ENCODE measurements at regions of chr4 and their contacts with region 1.

Region 1: DNA sequence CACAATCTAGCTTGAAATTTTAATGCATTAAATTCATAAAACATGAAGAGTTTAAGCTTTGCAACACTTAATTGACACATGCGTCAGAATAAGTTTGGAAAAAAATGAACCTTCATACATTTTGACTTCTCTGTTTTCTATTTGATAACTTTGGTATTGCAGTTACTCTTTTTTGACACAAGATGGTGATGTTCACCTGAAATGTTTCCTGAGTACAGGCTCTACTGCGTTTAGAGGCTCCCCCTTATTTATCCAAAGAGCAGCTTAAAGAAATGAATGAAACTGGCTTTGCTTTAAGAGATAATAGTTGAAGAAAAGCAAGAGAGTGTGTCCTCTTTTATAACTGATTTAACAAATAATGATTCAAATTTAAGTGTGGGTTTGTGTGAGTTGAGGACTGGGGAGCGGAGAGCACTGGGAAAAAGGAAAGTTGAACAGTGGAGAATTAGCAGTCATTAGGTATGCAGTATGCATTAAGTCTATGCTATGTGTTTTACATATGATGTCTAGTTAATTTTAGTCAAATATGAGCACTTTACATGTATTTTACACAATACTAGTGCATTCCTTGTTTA is 180.6 kb upstream of the NUDT6 start:
- DNase-seq: peak in 3 of 9 donors; percentile 5 to 13 (median 8)
- ATAC-seq: peak; percentile 64
- H3K4me3 ChIP-seq: no peak overlapping the region
- H3K4me3 Mint-ChIP-seq: no peak overlapping the region
- H3K27ac ChIP-seq: no peak overlapping the region
- H3K27ac Mint-ChIP-seq: peak overlapping the region in 1 of 9 donors; percentile 12
- H3K4me1 ChIP-seq: no peaks in the 10 kb centered on the region
- H3K4me1 Mint-ChIP-seq: no peaks in the 10 kb centered on the region
- H3K27me3 ChIP-seq: no peaks in the 10 kb centered on the region
- H3K27me3 Mint-ChIP-seq: no peaks in the 10 kb centered on the region

Region 2: GRCh38 chr4:123390846-123391456 is 288.0 kb after region 1 on chr4:
- CTCF ChIA-PET with region 1: no interaction called
- POLR2A ChIA-PET with region 1: no interaction called
- intact Hi-C with region 1: loop called in 1 of 2 experiments (anchors 1 kb)
- DNase-seq: peak in 4 of 9 donors; percentile 9 to 32 (median 23)
- ATAC-seq: no peak
- H3K4me3 ChIP-seq: no peak overlapping the region
- H3K4me3 Mint-ChIP-seq: no peak overlapping the region
- H3K27ac ChIP-seq: no peak overlapping the region
- H3K27ac Mint-ChIP-seq: no peak overlapping the region
- H3K4me1 ChIP-seq: no peaks in the 10 kb centered on the region
- H3K4me1 Mint-ChIP-seq: peaks cover 0 to 4% (median 0%) of the 10 kb centered on the region in 7 donors
- H3K27me3 ChIP-seq: no peaks in the 10 kb centered on the region
- H3K27me3 Mint-ChIP-seq: peaks cover 0 to 33% (median 13%) of the 10 kb centered on the region in 5 donors

Region 3: GRCh38 chr4:123564758-123565346 is 461.9 kb after region 1 on chr4:
- CTCF ChIA-PET with region 1: no interaction called
- POLR2A ChIA-PET with region 1: no interaction called
- intact Hi-C with region 1: loop called in 1 of 2 experiments (anchors 2 kb)
- DNase-seq: peak in 8 of 9 donors; percentile 1 to 55 (median 26)
- ATAC-seq: peak; percentile 98
- H3K4me3 ChIP-seq: no peak overlapping the region
- H3K4me3 Mint-ChIP-seq: no peak overlapping the region
- H3K27ac ChIP-seq: no peak overlapping the region
- H3K27ac Mint-ChIP-seq: no peak overlapping the region
- H3K4me1 ChIP-seq: no peaks in the 10 kb centered on the region
- H3K4me1 Mint-ChIP-seq: peaks cover 0 to 6% (median 0%) of the 10 kb centered on the region in 7 donors
- H3K27me3 ChIP-seq: no peaks in the 10 kb centered on the region
- H3K27me3 Mint-ChIP-seq: peaks cover 8 to 25% (median 16%) of the 10 kb centered on the region in 5 donors

Region 4: GRCh38 chr4:123661080-123661737 is 558.2 kb after region 1 on chr4:
- CTCF ChIA-PET with region 1: no interaction called
- POLR2A ChIA-PET with region 1: no interaction called
- intact Hi-C with region 1: loop called (anchors 2 kb)
- DNase-seq: peak in 3 of 9 donors; percentile 3 to 6 (median 4)
- ATAC-seq: no peak
- H3K4me3 ChIP-seq: no peak overlapping the region
- H3K4me3 Mint-ChIP-seq: no peak overlapping the region
- H3K27ac ChIP-seq: no peak overlapping the region
- H3K27ac Mint-ChIP-seq: no peak overlapping the region
- H3K4me1 ChIP-seq: no peaks in the 10 kb centered on the region
- H3K4me1 Mint-ChIP-seq: peaks cover 0 to 7% (median 0%) of the 10 kb centered on the region in 7 donors
- H3K27me3 ChIP-seq: no peaks in the 10 kb centered on the region
- H3K27me3 Mint-ChIP-seq: peaks cover 3 to 31% (median 5%) of the 10 kb centered on the region in 5 donors

Region 5: DNA sequence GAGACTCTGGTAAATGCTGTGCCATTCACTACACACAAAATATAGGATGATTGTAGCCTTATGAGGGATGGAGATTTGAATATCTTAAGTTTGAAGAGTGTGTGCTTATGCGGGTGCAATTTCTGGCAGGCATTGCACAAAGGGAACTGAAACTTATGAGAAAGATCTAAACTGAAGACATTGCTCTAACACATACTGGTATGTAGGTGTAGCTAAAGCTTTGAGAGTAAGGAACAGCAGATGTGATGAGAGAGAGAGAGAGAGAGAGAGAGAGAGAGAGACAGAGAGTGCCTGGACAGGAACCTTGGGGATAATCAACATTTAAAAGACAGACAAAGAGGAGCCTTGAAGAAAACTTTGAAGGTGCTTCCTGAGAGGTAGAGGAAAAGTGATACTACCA is 673.3 kb after region 1 on chr4:
- CTCF ChIA-PET with region 1: no interaction called
- POLR2A ChIA-PET with region 1: no interaction called
- intact Hi-C with region 1: loop called in 1 of 2 experiments (anchors 10 kb)
- DNase-seq: no peak
- ATAC-seq: no peak
- H3K4me3 ChIP-seq: no peak overlapping the region
- H3K4me3 Mint-ChIP-seq: no peak overlapping the region
- H3K27ac ChIP-seq: no peak overlapping the region
- H3K27ac Mint-ChIP-seq: no peak overlapping the region
- H3K4me1 ChIP-seq: no peaks in the 10 kb centered on the region
- H3K4me1 Mint-ChIP-seq: peaks cover 0 to 2% (median 0%) of the 10 kb centered on the region in 7 donors
- H3K27me3 ChIP-seq: no peaks in the 10 kb centered on the region
- H3K27me3 Mint-ChIP-seq: peaks cover 0 to 8% (median 5%) of the 10 kb centered on the region in 5 donors

Region 6: GRCh38 chr4:124262211-124263179 is 1159.5 kb after region 1 on chr4:
- CTCF ChIA-PET with region 1: no interaction called
- POLR2A ChIA-PET with region 1: no interaction called
- intact Hi-C with region 1: loop called in 1 of 2 experiments (anchors 1 kb)
- DNase-seq: peak in 6 of 9 donors; percentile 7 to 28 (median 20)
- ATAC-seq: peak; percentile 47
- H3K4me3 ChIP-seq: no peak overlapping the region
- H3K4me3 Mint-ChIP-seq: no peak overlapping the region
- H3K27ac ChIP-seq: no peak overlapping the region
- H3K27ac Mint-ChIP-seq: no peak overlapping the region
- H3K4me1 ChIP-seq: no peaks in the 10 kb centered on the region
- H3K4me1 Mint-ChIP-seq: no peaks in the 10 kb centered on the region
- H3K27me3 ChIP-seq: no peaks in the 10 kb centered on the region
- H3K27me3 Mint-ChIP-seq: peaks cover 0 to 14% (median 4%) of the 10 kb centered on the region in 5 donors

Region 7: GRCh38 chr4:124322234-124323065 is 1219.5 kb after region 1 on chr4:
- CTCF ChIA-PET with region 1: no interaction called
- POLR2A ChIA-PET with region 1: no interaction called
- intact Hi-C with region 1: loop called in 1 of 2 experiments (anchors 1 kb)
- DNase-seq: peak in 4 of 9 donors; percentile 6 to 22 (median 12)
- ATAC-seq: no peak
- H3K4me3 ChIP-seq: no peak overlapping the region
- H3K4me3 Mint-ChIP-seq: no peak overlapping the region
- H3K27ac ChIP-seq: no peak overlapping the region
- H3K27ac Mint-ChIP-seq: no peak overlapping the region
- H3K4me1 ChIP-seq: no peaks in the 10 kb centered on the region
- H3K4me1 Mint-ChIP-seq: no peaks in the 10 kb centered on the region
- H3K27me3 ChIP-seq: no peaks in the 10 kb centered on the region
- H3K27me3 Mint-ChIP-seq: peaks cover 0 to 3% (median 0%) of the 10 kb centered on the region in 5 donors